ENCODE measurements at regions of chr1 and their contacts with region 1.

Region 1: DNA sequence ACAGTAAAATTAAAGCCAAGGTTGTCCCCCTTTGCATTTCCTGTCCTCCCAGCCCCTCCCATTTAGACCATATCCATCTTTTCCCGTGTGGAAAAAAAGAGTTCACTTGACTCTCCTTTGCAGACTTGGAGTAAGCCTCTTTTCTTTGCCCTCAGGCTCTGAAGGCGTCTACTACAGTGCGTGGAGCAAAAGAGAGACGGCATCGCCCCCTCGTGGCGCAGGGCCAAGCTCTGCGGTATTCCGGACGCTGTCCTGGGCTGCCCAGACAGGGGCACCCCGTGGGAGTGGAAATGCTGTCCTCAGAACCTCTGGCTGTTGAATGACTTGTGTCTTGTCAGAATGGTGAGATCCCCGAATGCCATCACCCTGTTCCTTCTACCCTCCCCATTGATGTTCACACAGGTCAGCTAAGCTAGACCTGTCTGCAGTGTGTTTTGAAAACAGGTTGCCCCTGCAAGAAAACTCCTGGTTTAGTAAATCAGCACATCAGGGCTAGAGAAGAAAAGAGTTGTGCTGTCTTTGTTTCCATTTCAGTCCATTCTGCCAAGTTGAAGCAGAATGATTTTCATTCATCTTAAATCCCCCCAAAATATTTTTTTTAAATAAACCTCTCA is 12.3 kb upstream of the GJA8 start:
- DNase-seq: peak; percentile 81 to 92
- ATAC-seq: peak; percentile 84
- H3K4me3 ChIP-seq: no peak overlapping the region
- H3K27ac ChIP-seq: no peak overlapping the region
- H3K4me1 ChIP-seq: no peaks in the 10 kb centered on the region
- H3K27me3 ChIP-seq: no peaks in the 10 kb centered on the region

Region 2: GRCh38 chr1:147723691-147724323 is 166.5 kb before region 1 on chr1:
- intact Hi-C with region 1: loop called (anchors 1 kb)
- DNase-seq: peak; percentile 54 to 78
- ATAC-seq: peak; percentile 66
- H3K4me3 ChIP-seq: no peak overlapping the region
- H3K27ac ChIP-seq: no peak overlapping the region
- H3K4me1 ChIP-seq: no peaks in the 10 kb centered on the region
- H3K27me3 ChIP-seq: no peaks in the 10 kb centered on the region

Region 3: DNA sequence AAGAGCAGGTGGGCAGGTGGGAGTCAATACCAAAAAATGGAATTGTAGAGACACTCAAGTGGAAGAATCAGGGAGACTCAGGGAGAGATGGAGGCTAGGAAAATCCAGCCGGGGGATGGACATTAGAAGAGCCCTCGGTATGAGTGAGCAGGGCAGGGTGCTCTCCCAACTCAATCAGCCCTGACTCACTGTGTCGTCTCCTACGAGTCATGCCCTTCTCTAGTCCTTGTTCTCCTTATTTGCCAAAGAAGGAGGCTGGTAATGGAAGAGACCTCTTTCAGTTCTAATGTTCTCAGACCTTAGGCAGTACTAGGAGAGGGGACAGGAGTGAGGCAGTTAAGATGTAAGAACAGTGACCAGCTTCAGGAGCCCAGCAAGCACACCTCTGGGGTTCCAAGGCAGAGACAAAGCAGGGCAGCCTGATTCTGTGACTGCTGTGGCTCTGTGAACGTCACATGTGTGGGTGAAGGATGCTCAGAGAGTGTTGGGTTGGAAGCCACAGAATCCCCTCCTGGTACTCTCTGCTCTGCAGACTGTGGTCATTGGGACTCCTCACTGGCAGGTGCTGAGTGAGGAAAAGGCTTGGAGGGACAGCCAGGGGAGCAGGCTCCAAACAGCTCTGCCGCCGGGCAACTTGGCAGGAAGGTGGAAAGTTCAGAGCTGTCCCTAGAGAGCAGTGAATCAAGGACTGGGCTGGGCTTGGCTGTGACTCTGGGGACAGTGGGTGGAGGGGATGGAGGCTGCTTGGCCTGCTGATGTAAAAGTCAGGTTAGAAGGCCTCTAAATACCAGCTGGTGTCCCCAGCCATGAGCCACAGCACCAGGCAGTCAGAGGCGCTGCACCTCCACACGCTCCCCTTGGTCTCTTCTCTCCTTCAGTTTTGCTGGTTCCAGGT is 118.8 kb before region 1 on chr1:
- intact Hi-C with region 1: loop called in 1 of 2 experiments (anchors 5 kb)
- DNase-seq: peak; percentile 87 to 89
- ATAC-seq: peak; percentile 89
- H3K4me3 ChIP-seq: peak overlapping the region in 1 of 2 donors; percentile 84
- H3K27ac ChIP-seq: peak overlapping the region; percentile 73 to 87
- H3K4me1 ChIP-seq: peaks cover 11% of the 10 kb centered on the region in 2 donors
- H3K27me3 ChIP-seq: no peaks in the 10 kb centered on the region

Measured in aorta (tissue), 5 donors.